ENCODE measurements at regions of chr15 and their contacts with region 1.

Region 1: DNA sequence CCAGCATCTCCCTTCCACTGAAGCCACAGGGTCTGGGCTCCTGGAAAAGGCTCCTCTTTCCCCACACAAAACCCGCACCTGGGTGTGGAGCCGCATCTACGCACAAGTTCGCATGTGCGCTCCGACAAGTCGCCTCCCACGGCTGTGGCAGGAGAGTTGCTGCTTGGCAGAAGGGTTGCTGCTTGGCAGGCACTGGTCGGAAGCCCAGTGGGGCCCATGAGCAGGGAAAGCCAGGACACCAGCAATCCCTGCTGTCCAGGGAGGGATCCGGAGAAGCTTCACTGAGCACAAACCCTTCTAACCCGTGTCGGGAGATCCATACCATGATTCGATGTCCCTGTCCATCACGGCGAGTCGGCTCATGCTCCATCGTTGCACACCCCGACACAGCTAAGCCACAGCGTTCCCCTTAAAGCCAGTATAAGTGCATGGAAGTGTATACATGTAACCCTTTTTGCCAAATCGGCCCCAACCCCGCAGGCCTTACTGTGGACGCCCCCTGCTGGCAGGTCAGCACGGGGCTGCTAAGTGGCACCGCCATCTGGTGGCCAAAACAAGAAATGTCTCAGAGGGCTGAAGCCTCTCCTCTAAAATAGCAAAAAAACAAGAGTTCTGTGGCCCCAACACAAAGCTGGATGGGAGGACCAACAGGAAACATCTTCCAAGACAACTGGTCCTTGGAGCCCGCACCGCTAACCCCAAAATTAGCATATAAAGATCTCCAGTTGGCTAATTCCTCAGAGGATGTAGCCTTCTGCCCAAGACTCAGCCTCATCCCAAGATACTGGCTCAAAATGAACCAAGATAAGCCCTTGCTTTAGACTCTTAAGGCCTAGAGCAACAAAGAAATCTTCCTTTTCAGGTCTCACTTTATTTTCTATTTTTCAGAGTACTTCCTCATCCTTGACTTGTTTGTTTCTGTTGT is 8.3 kb downstream of the ANKRD63 start:
- DNase-seq: peak; percentile 86 to 95
- ATAC-seq: peak; percentile 85 to 92 (median 88)
- H3K4me3 ChIP-seq: no peak overlapping the region
- H3K4me3 Mint-ChIP-seq: no peak overlapping the region
- H3K27ac ChIP-seq: no peak overlapping the region
- H3K27ac Mint-ChIP-seq: peak overlapping the region in 1 of 2 donors; percentile 45
- H3K4me1 ChIP-seq: peaks cover 24% of the 10 kb centered on the region
- H3K4me1 Mint-ChIP-seq: peaks cover 0 to 10% of the 10 kb centered on the region in 2 donors
- H3K27me3 ChIP-seq: peaks cover 8% of the 10 kb centered on the region
- H3K27me3 Mint-ChIP-seq: peaks cover 11 to 17% of the 10 kb centered on the region in 2 donors
- CTCF ChIP-seq: peak; percentile 100

Region 2: GRCh38 chr15:39782441-39783138 is 492.0 kb before region 1 on chr15 and contains the start of gene FSIP1:
- intact Hi-C with region 1: loop called (anchors 5 kb)
- DNase-seq: peak; percentile 97 to 98
- ATAC-seq: peak; percentile 97 to 100 (median 98)
- H3K4me3 ChIP-seq: peak within 1 kb of the TSS; percentile 73
- H3K4me3 Mint-ChIP-seq: peak within 1 kb of the TSS; percentile 77
- H3K27ac ChIP-seq: peak within 1 kb of the TSS; percentile 71
- H3K27ac Mint-ChIP-seq: peak within 1 kb of the TSS; percentile 84 to 93
- H3K4me1 ChIP-seq: peaks cover 3% of the 10 kb centered on the region
- H3K4me1 Mint-ChIP-seq: peaks cover 33 to 36% of the 10 kb centered on the region in 2 donors
- H3K27me3 ChIP-seq: no peaks in the 10 kb centered on the region
- H3K27me3 Mint-ChIP-seq: peaks cover 0 to 13% of the 10 kb centered on the region in 2 donors
- CTCF ChIP-seq: no peak
- total RNA-seq, gene FSIP1: 1.1 to 2.3 (median 1.8) TPM

Region 3: GRCh38 chr15:40010686-40011085 is 263.9 kb before region 1 on chr15:
- intact Hi-C with region 1: no loop called
- DNase-seq: no peak
- ATAC-seq: no peak
- H3K4me3 ChIP-seq: no peak overlapping the region
- H3K4me3 Mint-ChIP-seq: no peak overlapping the region
- H3K27ac ChIP-seq: no peak overlapping the region
- H3K27ac Mint-ChIP-seq: no peak overlapping the region
- H3K4me1 ChIP-seq: no peaks in the 10 kb centered on the region
- H3K4me1 Mint-ChIP-seq: no peaks in the 10 kb centered on the region
- H3K27me3 ChIP-seq: no peaks in the 10 kb centered on the region
- H3K27me3 Mint-ChIP-seq: no peaks in the 10 kb centered on the region
- CTCF ChIP-seq: no peak

Region 4: DNA sequence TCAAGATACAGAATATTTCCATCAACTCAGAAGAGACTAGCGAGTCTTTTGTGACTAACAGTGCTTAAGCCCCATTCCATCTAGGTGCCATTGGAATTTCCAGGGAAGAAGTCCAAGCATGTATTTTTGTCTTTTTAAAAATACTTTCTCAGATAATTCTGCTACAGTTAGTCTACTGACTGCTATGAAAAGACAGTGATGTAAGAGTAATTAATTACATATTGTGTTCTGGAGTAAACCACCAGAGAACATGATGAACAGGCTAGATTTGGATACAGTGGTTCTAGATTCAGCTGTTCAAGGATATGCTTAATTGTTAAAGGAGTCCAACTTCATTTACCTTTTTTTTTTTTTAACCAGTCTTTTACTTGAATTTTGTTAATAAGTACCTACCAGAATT is 70.5 kb before region 1 on chr15:
- intact Hi-C with region 1: no loop called
- DNase-seq: no peak
- ATAC-seq: no peak
- H3K4me3 ChIP-seq: no peak overlapping the region
- H3K4me3 Mint-ChIP-seq: no peak overlapping the region
- H3K27ac ChIP-seq: no peak overlapping the region
- H3K27ac Mint-ChIP-seq: no peak overlapping the region
- H3K4me1 ChIP-seq: no peaks in the 10 kb centered on the region
- H3K4me1 Mint-ChIP-seq: no peaks in the 10 kb centered on the region
- H3K27me3 ChIP-seq: no peaks in the 10 kb centered on the region
- H3K27me3 Mint-ChIP-seq: no peaks in the 10 kb centered on the region
- CTCF ChIP-seq: no peak

Region 5: GRCh38 chr15:40217159-40217824 is 57.3 kb before region 1 on chr15:
- intact Hi-C with region 1: loop called (anchors 1 kb)
- DNase-seq: peak in 1 of 2 donors; percentile 87
- ATAC-seq: peak; percentile 93 to 99 (median 99)
- H3K4me3 ChIP-seq: no peak overlapping the region
- H3K4me3 Mint-ChIP-seq: no peak overlapping the region
- H3K27ac ChIP-seq: no peak overlapping the region
- H3K27ac Mint-ChIP-seq: no peak overlapping the region
- H3K4me1 ChIP-seq: no peaks in the 10 kb centered on the region
- H3K4me1 Mint-ChIP-seq: peaks cover 0 to 7% of the 10 kb centered on the region in 2 donors
- H3K27me3 ChIP-seq: no peaks in the 10 kb centered on the region
- H3K27me3 Mint-ChIP-seq: no peaks in the 10 kb centered on the region
- CTCF ChIP-seq: peak; percentile 93

Region 6: DNA sequence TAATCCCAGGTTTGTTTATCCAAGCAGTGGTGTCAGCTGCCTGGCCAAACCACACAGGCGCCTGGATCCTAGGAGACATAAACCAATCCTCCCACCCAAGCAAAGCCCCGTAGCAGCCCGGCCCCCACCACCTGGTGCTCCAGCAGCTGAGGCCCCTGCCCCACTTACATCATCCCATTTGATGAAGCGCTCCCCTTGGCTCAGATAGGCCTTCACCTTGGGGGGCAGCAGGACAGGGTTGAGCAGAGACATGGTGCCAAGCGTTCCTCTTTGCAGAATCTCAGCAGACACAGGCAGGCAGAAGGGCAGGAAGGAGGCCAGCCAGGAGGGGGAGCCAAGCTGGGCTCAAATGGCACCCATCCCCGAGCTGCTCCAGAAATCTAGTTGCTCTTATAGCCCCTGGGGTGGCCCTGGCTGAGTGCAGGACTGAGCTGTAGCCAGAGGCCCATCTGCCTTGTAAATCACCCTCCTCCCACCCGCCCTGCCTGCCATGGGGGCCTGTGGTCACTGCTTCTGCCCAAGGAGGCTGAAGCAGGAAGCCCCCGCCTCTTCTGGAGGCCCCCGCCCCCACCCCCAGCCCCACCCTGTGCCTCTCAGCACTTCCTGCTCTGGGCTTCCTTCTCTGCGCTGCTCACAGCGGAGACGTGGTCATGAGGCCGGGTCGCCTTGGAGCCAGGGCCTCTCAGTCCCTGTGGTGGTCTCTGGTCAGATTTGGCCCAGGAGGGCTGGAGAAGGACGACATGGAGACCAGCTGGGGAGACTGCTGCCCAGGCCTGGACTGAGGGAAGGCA is 33.0 kb after region 1 on chr15 and contains the start of gene PLCB2:
- intact Hi-C with region 1: loop called (anchors 1 kb)
- DNase-seq: peak; percentile 60 to 85
- ATAC-seq: peak; percentile 78 to 85 (median 79)
- H3K4me3 ChIP-seq: peak within 1 kb of the TSS; percentile 86
- H3K4me3 Mint-ChIP-seq: peak within 1 kb of the TSS; percentile 95
- H3K27ac ChIP-seq: peak within 1 kb of the TSS; percentile 89
- H3K27ac Mint-ChIP-seq: peak within 1 kb of the TSS; percentile 84 to 92
- H3K4me1 ChIP-seq: peaks cover 56% of the 10 kb centered on the region
- H3K4me1 Mint-ChIP-seq: peaks cover 58 to 70% of the 10 kb centered on the region in 2 donors
- H3K27me3 ChIP-seq: no peaks in the 10 kb centered on the region
- H3K27me3 Mint-ChIP-seq: no peaks in the 10 kb centered on the region
- CTCF ChIP-seq: peak; percentile 62
- total RNA-seq, gene PLCB2: 345 to 440 (median 432) TPM

Region 7: DNA sequence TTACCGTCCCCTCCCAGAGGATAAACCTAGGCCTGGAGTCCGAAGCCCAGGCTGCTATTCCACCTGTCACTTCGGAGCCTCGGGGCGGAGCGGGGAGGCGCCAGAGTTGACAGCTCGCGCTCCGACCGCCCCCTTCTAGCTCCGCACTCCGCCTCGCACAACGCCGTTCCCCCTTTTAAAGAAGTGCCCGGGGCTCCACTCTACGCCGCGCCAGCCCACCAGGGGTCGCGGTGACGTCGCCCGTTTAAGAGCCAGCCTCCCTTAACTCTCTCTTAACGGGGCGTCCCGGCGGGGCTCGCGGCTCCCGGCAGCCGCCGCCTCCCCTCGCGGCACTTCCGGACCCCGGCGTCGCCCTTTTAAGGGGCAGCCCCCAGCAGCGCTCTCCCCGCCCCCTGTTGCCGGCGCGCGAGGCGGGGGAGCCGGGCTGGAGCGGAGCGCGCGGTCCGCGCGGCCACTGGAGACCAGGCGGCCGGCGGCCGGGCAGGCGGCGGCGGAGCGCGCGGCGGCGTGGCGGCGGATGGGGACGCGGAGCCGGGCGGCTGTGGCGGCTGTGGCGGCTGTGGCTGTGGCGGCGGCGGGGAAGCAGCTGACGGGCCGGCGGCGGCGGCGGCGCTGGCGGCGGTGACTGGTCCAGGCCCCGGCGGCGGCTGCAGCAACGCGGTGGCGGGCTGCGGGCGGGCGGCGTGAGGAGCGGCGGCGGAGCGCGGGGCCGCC is 48.8 kb after region 1 on chr15 and contains the start of gene INAFM2:
- intact Hi-C with region 1: no loop called
- DNase-seq: peak; percentile 84 to 96
- ATAC-seq: peak; percentile 83 to 93 (median 86)
- H3K4me3 ChIP-seq: peak within 1 kb of the TSS; percentile 35
- H3K4me3 Mint-ChIP-seq: peak within 1 kb of the TSS; percentile 87
- H3K27ac ChIP-seq: peak within 1 kb of the TSS; percentile 40
- H3K27ac Mint-ChIP-seq: peak within 1 kb of the TSS; percentile 78 to 92
- H3K4me1 ChIP-seq: peaks cover 23% of the 10 kb centered on the region
- H3K4me1 Mint-ChIP-seq: peaks cover 39 to 52% of the 10 kb centered on the region in 2 donors
- H3K27me3 ChIP-seq: no peaks in the 10 kb centered on the region
- H3K27me3 Mint-ChIP-seq: no peaks in the 10 kb centered on the region
- CTCF ChIP-seq: peak; percentile 59
- total RNA-seq, gene INAFM2: 14.0 to 21.7 (median 15.1) TPM

Region 8: DNA sequence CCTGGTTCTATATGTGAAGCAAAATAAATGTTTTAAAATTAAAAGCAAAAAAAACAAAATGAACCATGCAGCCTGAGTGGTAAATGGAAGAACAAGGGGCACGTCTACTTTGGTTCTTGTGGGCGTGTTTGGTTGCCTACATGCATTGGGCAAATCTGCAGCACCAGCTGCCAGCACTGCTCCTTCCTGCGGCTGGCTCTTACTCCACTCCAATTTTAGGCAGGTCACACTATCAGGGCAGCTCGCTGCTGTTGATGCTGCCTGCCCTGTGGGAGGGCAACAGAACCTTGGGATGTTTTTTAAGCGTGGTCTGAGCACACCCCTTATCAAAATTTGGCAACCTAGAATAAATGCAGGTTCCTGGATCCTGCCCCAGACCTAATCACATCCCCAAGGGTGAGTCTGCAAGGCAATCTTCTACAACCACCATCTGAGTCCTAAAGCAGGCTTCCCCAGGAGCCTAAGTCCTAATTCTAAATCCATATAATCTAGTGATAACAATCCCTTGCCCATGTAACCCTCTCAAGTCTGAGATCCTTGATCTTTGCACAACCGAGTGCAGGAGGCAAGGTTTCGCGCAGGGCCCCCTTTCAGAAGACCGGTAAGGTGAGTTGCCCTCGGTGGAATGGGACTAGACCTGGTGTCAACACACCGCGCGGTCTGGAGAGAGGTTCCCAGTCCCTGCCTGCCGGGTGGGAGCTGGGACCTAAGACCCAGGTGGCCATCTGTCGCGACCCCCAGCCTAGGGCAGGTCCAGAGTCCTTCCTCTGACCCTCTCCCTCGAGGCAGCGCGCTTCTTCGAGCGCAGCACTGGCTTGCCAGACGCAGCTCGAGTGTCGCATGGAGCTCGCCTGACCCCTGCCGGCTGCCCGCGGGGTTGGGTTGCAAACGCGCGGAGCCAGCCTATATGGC is 146.9 kb after region 1 on chr15:
- intact Hi-C with region 1: loop called (anchors 1 kb)
- DNase-seq: peak; percentile 73 to 85
- ATAC-seq: peak; percentile 93 to 100 (median 98)
- H3K4me3 ChIP-seq: no peak overlapping the region
- H3K4me3 Mint-ChIP-seq: no peak overlapping the region
- H3K27ac ChIP-seq: no peak overlapping the region
- H3K27ac Mint-ChIP-seq: no peak overlapping the region
- H3K4me1 ChIP-seq: peaks cover 6% of the 10 kb centered on the region
- H3K4me1 Mint-ChIP-seq: no peaks in the 10 kb centered on the region
- H3K27me3 ChIP-seq: no peaks in the 10 kb centered on the region
- H3K27me3 Mint-ChIP-seq: no peaks in the 10 kb centered on the region
- CTCF ChIP-seq: peak; percentile 86

Measured in natural killer cell (primary cell).